ENCODE measurements at regions of chr19 and their contacts with region 1.

Region 1: DNA sequence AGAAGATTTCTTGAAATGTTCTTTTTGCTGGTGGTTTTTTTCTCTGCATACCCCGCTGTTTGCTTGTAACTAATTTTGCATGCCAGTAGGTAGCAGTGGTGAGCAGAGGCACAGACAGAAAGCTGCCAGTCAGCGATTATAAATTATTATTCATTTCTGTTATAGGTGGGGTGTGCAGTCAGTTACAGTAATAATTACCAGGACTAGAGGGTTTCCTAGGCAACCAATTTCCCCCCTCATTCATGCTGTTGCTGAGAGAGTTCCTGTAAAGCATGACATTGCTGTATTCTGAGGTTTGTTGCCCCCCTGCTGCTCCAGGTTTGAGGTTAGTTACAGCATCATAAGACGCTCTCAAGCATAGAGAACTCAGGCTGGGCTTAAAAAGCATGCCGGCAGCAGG is 104.5 kb downstream of the URI1 start:
- DNase-seq: no peak
- ATAC-seq: no peak

Region 2: GRCh38 chr19:29315556-29316190 is 730.8 kb before region 1 on chr19:
- intact Hi-C with region 1: loop called (anchors 5 kb)
- DNase-seq: no peak
- ATAC-seq: no peak

Region 3: GRCh38 chr19:30105727-30106126 is 59.2 kb after region 1 on chr19:
- intact Hi-C with region 1: no loop called
- DNase-seq: no peak
- ATAC-seq: no peak

Region 4: GRCh38 chr19:30209617-30210600 is 163.4 kb after region 1 on chr19:
- intact Hi-C with region 1: loop called (anchors 10 kb)
- DNase-seq: no peak
- ATAC-seq: no peak

Measured in sciatic nerve (tissue), 2 donors.